Caco-2 (cell line): ENCODE measurements at regions of chr4 and their contacts with region 1.

Region 1: DNA sequence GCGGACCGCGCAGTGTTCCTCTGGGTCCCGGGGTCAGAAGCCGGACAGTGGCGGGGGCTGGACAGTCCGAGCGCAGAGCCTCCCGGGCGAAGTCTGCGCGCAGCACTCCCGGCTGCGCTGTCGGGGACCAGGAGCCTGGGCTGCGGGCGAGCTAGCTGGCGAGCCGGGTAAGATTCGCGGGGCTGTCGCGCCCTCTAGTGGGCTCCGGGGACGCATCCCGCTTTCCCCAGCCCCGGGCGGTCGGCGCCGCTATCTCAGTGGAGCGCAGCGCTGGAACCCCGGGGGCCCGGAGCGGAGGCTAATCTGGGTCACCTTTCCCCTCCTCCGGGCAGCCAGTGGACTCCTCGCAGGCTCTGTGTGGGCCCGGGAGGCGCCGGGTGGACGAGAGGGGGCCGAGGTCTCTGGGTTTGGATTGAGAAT is 4.2 kb downstream of the PDGFRA start:
- DNase-seq: peak; percentile 80 to 87
- H3K4me3 ChIP-seq: peak overlapping the region; percentile 75
- H3K4me3 Mint-ChIP-seq: peak overlapping the region; percentile 87
- H3K27ac Mint-ChIP-seq: no peak overlapping the region
- H3K4me1 ChIP-seq: peaks cover 6% of the 10 kb centered on the region
- H3K4me1 Mint-ChIP-seq: peaks cover 9% of the 10 kb centered on the region
- H3K27me3 ChIP-seq: no peaks in the 10 kb centered on the region
- H3K27me3 Mint-ChIP-seq: no peaks in the 10 kb centered on the region
- CTCF ChIP-seq: peak in 1 of 2 experiments; percentile 77

Region 2: DNA sequence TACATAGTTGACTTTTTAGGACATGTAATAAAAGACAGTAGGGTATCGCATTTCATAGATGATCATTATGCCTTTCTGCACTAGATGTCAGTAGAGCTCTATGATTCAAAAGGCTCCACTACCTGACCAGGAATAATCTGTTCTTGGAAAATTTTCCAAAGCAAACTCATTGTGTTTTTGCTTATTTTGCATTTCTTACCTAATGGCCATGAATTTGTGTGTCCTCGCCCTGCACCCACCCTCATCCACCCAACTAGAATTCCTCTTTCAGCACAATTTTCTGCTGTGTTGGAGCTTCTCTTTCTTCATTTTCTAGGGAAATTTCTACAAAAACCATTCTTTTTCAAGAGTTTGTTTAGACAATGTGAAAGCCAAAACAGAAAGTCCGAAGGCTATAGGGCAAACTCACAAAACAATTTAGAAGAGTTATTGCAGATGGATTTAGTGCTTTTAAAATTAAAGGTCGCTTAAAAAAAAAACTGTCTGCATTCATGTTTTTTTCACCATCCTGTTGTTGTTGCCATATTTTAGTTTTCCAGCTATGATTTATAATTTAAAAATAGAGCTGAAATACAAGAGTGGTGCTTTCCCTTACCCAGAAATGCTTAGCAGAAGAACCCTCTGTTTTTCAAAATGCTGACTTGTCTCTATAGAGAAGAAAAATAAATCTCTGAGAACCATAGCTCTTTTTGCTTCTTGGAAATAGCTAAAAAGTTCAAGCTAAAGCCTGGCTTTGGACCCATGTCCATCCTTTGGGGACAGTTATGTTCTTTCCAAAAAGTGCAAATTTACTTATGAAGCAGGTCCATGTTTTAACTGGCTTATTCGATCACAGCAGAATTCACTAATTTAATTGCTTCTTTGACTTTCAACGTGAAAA is 1998.5 kb before region 1 on chr4:
- CTCF ChIA-PET with region 1: no interaction called
- POLR2A ChIA-PET with region 1: no interaction called
- intact Hi-C with region 1: loop called (anchors 5 kb)
- DNase-seq: peak in 1 of 2 experiments; percentile 34
- H3K4me3 ChIP-seq: no peak overlapping the region
- H3K4me3 Mint-ChIP-seq: no peak overlapping the region
- H3K27ac Mint-ChIP-seq: no peak overlapping the region
- H3K4me1 ChIP-seq: no peaks in the 10 kb centered on the region
- H3K4me1 Mint-ChIP-seq: no peaks in the 10 kb centered on the region
- H3K27me3 ChIP-seq: no peaks in the 10 kb centered on the region
- H3K27me3 Mint-ChIP-seq: peaks cover 8% of the 10 kb centered on the region
- CTCF ChIP-seq: peak; percentile 43 to 57

Region 3: GRCh38 chr4:53196882-53197771 is 1036.2 kb before region 1 on chr4:
- CTCF ChIA-PET with region 1: no interaction called
- POLR2A ChIA-PET with region 1: no interaction called
- intact Hi-C with region 1: loop called (anchors 1 kb)
- DNase-seq: peak in 1 of 2 experiments; percentile 59
- H3K4me3 ChIP-seq: no peak overlapping the region
- H3K4me3 Mint-ChIP-seq: no peak overlapping the region
- H3K27ac Mint-ChIP-seq: no peak overlapping the region
- H3K4me1 ChIP-seq: no peaks in the 10 kb centered on the region
- H3K4me1 Mint-ChIP-seq: peaks cover 3% of the 10 kb centered on the region
- H3K27me3 ChIP-seq: no peaks in the 10 kb centered on the region
- H3K27me3 Mint-ChIP-seq: no peaks in the 10 kb centered on the region
- CTCF ChIP-seq: peak; percentile 61 to 66

Region 4: DNA sequence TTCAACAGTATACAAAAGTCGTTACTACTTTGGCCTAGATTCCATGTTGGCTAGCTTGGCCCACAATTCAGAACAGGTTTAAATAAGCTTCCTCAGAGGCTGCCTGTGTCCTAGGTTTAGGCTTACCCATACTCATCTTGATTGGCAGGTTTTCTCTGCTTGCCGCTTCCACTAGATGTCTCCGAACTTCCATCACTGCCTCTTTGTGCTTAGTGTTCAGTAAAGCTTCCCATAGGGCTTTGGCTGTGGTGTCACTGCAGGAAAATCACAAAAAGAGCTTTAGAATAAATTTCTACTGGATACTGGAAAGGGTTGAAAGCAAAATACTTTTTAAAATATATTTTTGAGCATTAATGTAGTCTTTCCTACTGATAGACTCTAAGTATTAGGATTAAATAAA is 919.8 kb before region 1 on chr4:
- CTCF ChIA-PET with region 1: interaction called, 9 read pairs
- POLR2A ChIA-PET with region 1: no interaction called
- intact Hi-C with region 1: loop called (anchors 1 kb)
- DNase-seq: peak; percentile 38 to 48
- H3K4me3 ChIP-seq: no peak overlapping the region
- H3K4me3 Mint-ChIP-seq: no peak overlapping the region
- H3K27ac Mint-ChIP-seq: no peak overlapping the region
- H3K4me1 ChIP-seq: no peaks in the 10 kb centered on the region
- H3K4me1 Mint-ChIP-seq: peaks cover 13% of the 10 kb centered on the region
- H3K27me3 ChIP-seq: no peaks in the 10 kb centered on the region
- H3K27me3 Mint-ChIP-seq: no peaks in the 10 kb centered on the region
- CTCF ChIP-seq: peak in 1 of 2 experiments; percentile 54

Region 5: DNA sequence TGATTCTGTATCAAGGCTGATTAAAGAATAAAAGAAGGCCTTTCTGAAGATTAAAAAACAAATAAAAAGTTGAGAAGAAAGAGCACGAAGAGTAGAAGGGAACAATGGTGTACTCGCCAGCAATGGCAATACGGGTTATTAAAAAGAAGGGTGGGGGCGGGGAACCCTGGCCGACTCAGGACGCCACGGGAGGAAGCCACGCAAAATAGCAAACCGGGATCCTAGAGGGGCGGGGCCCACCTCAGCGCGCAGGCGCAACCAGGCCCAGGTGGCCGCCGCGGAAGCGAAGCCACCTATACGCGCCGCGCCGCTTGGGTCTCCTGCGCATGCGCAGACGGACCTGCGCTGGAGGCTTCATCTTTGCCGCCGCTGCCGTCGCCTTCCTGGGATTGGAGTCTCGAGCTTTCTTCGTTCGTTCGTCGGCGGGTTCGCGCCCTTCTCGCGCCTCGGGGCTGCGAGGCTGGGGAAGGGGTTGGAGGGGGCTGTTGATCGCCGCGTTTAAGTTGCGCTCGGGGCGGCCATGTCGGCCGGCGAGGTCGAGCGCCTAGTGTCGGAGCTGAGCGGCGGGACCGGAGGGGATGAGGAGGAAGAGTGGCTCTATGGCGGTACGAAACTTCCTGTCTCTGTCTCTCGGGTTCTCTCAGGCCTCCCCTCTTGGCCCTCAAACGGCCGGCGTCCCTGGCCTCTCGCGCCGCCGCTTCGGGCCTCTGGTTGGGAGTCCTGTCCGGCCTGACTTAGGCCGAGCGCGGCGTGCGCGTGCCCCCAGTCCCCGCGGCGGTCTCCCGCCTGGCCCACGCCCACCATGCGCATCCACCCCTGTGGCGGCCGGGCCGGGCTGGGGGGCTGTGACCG is 855.7 kb before region 1 on chr4 and contains the start of gene FIP1L1:
- CTCF ChIA-PET with region 1: no interaction called
- POLR2A ChIA-PET with region 1: no interaction called
- intact Hi-C with region 1: loop called (anchors 5 kb)
- DNase-seq: peak; percentile 93 to 96
- H3K4me3 ChIP-seq: peak within 1 kb of the TSS; percentile 78
- H3K4me3 Mint-ChIP-seq: peak within 1 kb of the TSS; percentile 98
- H3K27ac Mint-ChIP-seq: peak within 1 kb of the TSS; percentile 98
- H3K4me1 ChIP-seq: peaks cover 14% of the 10 kb centered on the region; the same call in 1 of the 2 replicates
- H3K4me1 Mint-ChIP-seq: peaks cover 16% of the 10 kb centered on the region
- H3K27me3 ChIP-seq: no peaks in the 10 kb centered on the region
- H3K27me3 Mint-ChIP-seq: no peaks in the 10 kb centered on the region
- CTCF ChIP-seq: no peak
- total RNA-seq, gene FIP1L1: 62.5 and 69.4 TPM in 2 replicates

Region 6: GRCh38 chr4:53702334-53703266 is 530.7 kb before region 1 on chr4:
- CTCF ChIA-PET with region 1: interaction called, 16 read pairs
- POLR2A ChIA-PET with region 1: interaction called, 3 read pairs
- intact Hi-C with region 1: loop called (anchors 2 kb)
- DNase-seq: no peak
- H3K4me3 ChIP-seq: no peak overlapping the region
- H3K4me3 Mint-ChIP-seq: no peak overlapping the region
- H3K27ac Mint-ChIP-seq: no peak overlapping the region
- H3K4me1 ChIP-seq: no peaks in the 10 kb centered on the region
- H3K4me1 Mint-ChIP-seq: peaks cover 9% of the 10 kb centered on the region
- H3K27me3 ChIP-seq: no peaks in the 10 kb centered on the region
- H3K27me3 Mint-ChIP-seq: no peaks in the 10 kb centered on the region
- CTCF ChIP-seq: no peak

Region 7: DNA sequence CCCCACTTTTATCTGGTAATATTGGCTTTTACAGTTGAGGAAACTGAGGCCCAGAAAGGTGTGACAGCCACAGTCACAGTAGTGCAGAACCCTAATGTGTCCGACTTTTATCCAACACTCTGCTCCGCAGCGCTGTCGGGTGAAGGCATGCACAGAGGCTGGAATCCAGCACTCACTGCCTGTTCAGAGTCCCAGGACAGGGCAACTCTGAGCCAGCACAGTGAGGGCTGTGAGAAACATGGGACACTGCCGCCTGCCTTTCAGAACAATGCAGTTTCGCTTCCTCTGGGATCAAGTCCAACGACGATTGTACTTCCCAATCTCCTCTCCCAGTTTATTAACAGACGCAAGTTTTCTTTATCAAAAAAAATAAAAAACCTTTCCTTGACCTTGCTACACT is 46.1 kb before region 1 on chr4:
- CTCF ChIA-PET with region 1: no interaction called
- POLR2A ChIA-PET with region 1: interaction called, 13 read pairs
- intact Hi-C with region 1: no loop called
- DNase-seq: no peak
- H3K4me3 ChIP-seq: no peak overlapping the region
- H3K4me3 Mint-ChIP-seq: no peak overlapping the region
- H3K27ac Mint-ChIP-seq: peak overlapping the region; percentile 48
- H3K4me1 ChIP-seq: peaks cover 18% of the 10 kb centered on the region
- H3K4me1 Mint-ChIP-seq: peaks cover 7% of the 10 kb centered on the region
- H3K27me3 ChIP-seq: no peaks in the 10 kb centered on the region
- H3K27me3 Mint-ChIP-seq: no peaks in the 10 kb centered on the region
- CTCF ChIP-seq: no peak